Upper lobe of right lung (tissue), 1 donor: ENCODE measurements at regions of chr17 and their contacts with region 1.

Region 1: DNA sequence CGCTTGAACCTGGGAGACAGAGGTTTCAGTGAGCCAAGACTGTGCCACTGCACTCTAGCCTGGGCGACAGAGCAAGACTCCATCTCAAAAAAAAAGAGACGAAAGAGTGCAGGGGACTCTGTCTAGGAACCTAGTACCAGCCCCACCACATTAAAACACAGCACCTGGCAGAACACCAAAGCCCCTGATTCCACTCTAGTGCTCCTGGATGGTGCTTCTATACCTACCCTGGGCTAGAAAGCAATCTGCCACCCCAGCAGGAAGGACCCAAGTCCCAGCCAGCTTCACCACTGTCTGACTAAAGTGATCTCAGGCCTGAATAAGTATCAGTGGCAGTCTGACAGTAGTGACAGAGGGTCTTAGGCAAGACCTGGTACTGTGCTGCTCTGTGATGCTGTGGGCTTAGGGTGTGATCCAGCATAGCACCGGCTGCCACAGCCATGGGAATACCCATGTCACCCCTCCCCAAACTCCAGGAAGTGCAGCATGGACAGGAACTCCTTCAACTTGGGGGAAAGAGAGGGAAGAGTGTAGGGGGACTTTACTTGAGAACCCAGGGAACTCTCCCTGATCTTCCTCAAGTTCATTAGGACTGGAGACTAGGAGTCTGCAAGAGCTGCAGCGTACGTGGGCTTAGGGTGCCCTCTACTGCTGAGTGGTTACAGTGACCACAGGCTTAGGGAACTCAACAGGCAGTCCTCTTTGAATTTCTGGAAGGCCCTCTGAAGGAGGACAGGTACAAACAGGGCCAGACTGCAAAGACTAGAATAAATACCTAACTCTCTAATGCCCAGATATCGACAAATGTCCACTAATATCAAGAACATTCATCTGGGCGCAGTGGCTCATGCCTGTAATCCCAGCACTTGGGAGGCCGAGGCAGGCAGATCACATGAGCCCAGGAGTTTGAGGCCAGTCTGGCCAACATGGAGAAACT is 30.0 kb upstream of the RNF43 start:
- DNase-seq: peak; percentile 83
- ATAC-seq: peak; percentile 98
- H3K4me3 ChIP-seq: no peak overlapping the region
- H3K27ac ChIP-seq: no peak overlapping the region
- H3K4me1 ChIP-seq: no peaks in the 10 kb centered on the region
- H3K27me3 ChIP-seq: no peaks in the 10 kb centered on the region
- CTCF ChIP-seq: peak; percentile 67

Region 2: GRCh38 chr17:58303971-58304725 is 143.2 kb before region 1 on chr17:
- intact Hi-C with region 1: loop called (anchors 10 kb)
- DNase-seq: peak; percentile 77
- ATAC-seq: peak; percentile 83
- H3K4me3 ChIP-seq: no peak overlapping the region
- H3K27ac ChIP-seq: no peak overlapping the region
- H3K4me1 ChIP-seq: no peaks in the 10 kb centered on the region
- H3K27me3 ChIP-seq: no peaks in the 10 kb centered on the region
- CTCF ChIP-seq: peak; percentile 74

Region 3: DNA sequence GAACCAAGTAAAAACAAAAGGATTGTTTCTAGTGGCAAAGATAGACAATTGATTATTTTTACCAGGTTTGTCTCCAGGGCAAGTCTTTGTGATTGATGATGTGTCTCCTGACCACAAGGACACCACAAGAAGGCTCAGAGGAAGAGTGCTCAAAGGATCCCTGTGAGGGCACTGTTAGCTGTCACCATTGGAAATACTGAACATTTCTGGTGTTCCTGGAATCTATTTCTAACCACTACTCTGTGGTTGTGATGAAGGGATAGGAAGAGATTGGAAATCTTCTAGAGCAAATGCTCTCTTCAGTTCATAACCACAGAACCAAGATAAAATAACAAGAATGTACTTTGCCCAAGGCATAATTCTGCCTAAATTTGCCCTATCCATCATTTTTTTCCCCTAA is 45.3 kb before region 1 on chr17:
- intact Hi-C with region 1: no loop called
- DNase-seq: no peak
- ATAC-seq: no peak
- H3K4me3 ChIP-seq: no peak overlapping the region
- H3K27ac ChIP-seq: no peak overlapping the region
- H3K4me1 ChIP-seq: no peaks in the 10 kb centered on the region
- H3K27me3 ChIP-seq: no peaks in the 10 kb centered on the region
- CTCF ChIP-seq: no peak

Region 4: DNA sequence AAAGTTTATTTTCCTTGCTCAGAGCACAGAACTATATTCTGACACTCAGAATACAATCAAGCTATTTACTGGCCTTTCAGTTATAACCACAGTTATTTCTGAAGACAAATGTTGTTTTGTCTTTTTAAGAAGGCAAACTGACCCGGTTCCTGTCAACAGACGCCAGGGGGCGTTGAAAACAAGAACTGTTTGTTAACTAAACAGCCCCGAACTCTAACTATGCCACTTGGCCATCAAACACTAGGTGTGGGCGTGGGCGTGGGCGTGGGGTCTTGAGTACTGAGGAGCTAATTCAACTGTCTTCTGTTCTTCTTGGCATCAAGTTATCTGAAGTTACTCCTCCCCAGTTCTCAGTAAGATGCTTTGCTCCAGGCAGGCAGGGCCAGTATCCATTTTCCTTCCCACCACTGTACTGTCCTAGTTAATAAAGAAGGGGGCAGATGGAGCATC is 130.4 kb after region 1 on chr17:
- intact Hi-C with region 1: no loop called
- DNase-seq: peak; percentile 69
- ATAC-seq: peak; percentile 58
- H3K4me3 ChIP-seq: no peak overlapping the region
- H3K27ac ChIP-seq: no peak overlapping the region
- H3K4me1 ChIP-seq: no peaks in the 10 kb centered on the region
- H3K27me3 ChIP-seq: no peaks in the 10 kb centered on the region
- CTCF ChIP-seq: peak; percentile 71